ENCODE measurements at regions of chr22 and their contacts with region 1.

Region 1: GRCh38 chr22:45268958-45269844 is 15.5 kb upstream of the UPK3A start:
- DNase-seq: no peak
- ATAC-seq: peak; percentile 38
- H3K4me3 ChIP-seq: peak overlapping the region; percentile 81 to 90 (median 85)
- H3K27ac ChIP-seq: peak overlapping the region; percentile 72
- H3K4me1 ChIP-seq: peaks cover 49% of the 10 kb centered on the region
- H3K27me3 ChIP-seq: no peaks in the 10 kb centered on the region
- CTCF ChIP-seq: peak; percentile 84
- EP300 ChIP-seq: no peak
- POLR2A ChIP-seq: peak; percentile 27 to 80; a peak in 2 of 4 replicates
- RAD21 ChIP-seq: peak; percentile 96

Region 2: DNA sequence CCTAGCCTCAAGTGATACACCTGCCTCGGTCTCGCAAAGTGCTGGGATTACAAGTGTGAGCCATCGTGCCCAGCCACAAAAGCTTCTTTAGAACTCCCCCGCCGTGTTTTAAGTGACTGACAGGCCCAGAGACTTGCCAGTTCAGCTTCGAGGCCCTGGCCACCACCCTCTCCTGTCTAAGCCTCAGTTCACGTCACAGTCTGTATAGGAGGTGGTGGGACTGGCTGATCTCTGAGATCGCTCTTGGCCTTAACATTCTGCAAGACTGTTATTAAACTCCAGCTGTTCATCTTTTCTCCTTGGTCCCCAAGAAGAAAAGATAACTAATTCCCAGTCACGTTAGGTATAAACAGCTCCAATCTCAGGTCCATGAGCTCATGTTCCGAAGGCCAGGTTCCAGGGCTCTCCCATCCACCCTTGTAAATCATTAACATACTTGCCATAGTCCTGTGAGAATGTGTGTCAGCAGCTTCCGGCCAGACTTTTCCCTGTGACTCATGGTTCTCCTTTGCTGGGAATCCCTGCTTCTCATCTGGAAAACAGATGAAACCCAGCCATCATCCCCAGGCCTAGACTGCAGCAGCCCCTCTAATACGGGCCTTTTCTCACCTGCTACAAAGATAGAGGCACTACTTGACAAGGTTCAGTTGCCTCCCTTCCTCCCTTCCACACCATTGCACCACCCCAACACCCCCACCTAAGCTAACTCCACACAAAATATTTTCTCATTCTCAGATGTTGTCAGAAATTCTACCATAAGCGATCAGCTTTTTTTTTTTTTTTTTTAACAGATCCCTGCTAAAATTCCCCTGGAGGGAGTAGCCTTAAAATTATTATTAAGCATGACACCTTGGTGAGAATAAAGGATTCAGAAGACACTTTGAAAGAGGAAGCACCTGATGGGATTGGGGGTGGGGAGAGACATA is 22.9 kb before region 1 on chr22:
- CTCF ChIA-PET with region 1: no interaction called
- POLR2A ChIA-PET with region 1: interaction called, 39 read pairs
- in situ Hi-C with region 1: no loop called
- intact Hi-C with region 1: no loop called
- DNase-seq: peak; percentile 98
- ATAC-seq: peak; percentile 87
- H3K4me3 ChIP-seq: peak overlapping the region in 2 of 3 experiments; percentile 3 to 52; a peak in 3 of 6 replicates
- H3K27ac ChIP-seq: peak overlapping the region; percentile 89
- H3K4me1 ChIP-seq: peaks cover 84% of the 10 kb centered on the region
- H3K27me3 ChIP-seq: no peaks in the 10 kb centered on the region
- CTCF ChIP-seq: no peak
- EP300 ChIP-seq: peak in 1 of 2 experiments; percentile 73; a peak in 2 of 4 replicates
- POLR2A ChIP-seq: peak in 1 of 2 experiments; percentile 58; a peak in 3 of 4 replicates
- RAD21 ChIP-seq: no peak

Region 3: GRCh38 chr22:45309472-45310227 is 40.4 kb after region 1 on chr22 and contains the start of gene FAM118A:
- CTCF ChIA-PET with region 1: no interaction called
- POLR2A ChIA-PET with region 1: interaction called, 56 read pairs
- in situ Hi-C with region 1: loop called (anchors 5 kb)
- intact Hi-C with region 1: loop called (anchors 2 kb)
- DNase-seq: peak; percentile 87
- ATAC-seq: peak; percentile 87
- H3K4me3 ChIP-seq: peak within 1 kb of the TSS; percentile 88 to 94 (median 92)
- H3K27ac ChIP-seq: peak within 1 kb of the TSS; percentile 76
- H3K4me1 ChIP-seq: peaks cover 71% of the 10 kb centered on the region
- H3K27me3 ChIP-seq: no peaks in the 10 kb centered on the region
- CTCF ChIP-seq: peak; percentile 44
- EP300 ChIP-seq: no peak; a peak in 1 of 4 replicates
- POLR2A ChIP-seq: peak; percentile 65 to 75
- RAD21 ChIP-seq: peak; percentile 70
- total RNA-seq, gene FAM118A: 26.4 and 36.7 TPM in 2 replicates

Region 4: DNA sequence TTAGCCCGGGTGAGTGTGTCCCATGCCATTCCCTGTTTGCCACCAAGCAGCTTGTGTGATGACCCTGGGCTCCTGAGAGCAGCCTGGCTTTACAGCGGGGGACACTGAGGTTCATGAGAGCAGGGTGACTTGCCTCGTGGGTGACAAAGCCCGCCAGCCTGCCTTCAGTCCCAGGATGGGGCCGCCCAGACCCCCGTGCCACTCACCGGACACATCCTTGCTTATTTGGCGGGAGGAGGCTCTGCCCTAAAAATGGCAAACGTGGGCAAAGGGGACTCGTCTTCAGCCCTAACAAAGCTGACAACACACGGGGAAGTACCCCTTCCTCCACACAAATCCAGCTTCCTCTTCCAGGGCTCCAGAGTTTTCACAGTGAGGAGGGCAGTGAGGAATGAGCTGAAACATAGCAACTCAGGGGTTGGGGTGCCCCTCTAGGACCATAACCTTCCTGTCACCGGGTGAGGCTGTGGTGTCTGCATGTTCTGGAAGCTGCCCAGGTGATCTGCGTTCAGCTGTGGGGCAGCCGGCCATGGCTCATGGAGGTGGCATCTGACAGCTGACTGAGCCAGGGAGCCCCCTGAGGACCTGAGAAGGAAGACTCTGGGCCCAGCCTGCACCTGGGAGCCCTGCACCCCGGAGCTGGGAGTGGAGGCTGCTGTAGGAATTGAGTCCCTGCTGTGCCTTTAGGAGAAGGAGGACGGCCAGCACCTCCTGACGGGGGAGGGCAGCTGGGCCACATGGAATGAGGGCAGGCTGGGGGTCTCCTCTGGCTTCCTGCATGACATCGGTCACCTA is 161.0 kb after region 1 on chr22:
- CTCF ChIA-PET with region 1: interaction called, 22 read pairs
- POLR2A ChIA-PET with region 1: interaction called, 6 read pairs
- in situ Hi-C with region 1: loop called (anchors 5 kb)
- intact Hi-C with region 1: loop called (anchors 1 kb)
- DNase-seq: no peak
- ATAC-seq: no peak
- H3K4me3 ChIP-seq: no peak overlapping the region
- H3K27ac ChIP-seq: no peak overlapping the region
- H3K4me1 ChIP-seq: peaks cover 23% of the 10 kb centered on the region
- H3K27me3 ChIP-seq: peaks cover 5 to 23% of the 10 kb centered on the region in 2 experiments; a peak in 4 of 5 replicates
- CTCF ChIP-seq: no peak
- EP300 ChIP-seq: no peak
- POLR2A ChIP-seq: no peak
- RAD21 ChIP-seq: no peak

Region 5: DNA sequence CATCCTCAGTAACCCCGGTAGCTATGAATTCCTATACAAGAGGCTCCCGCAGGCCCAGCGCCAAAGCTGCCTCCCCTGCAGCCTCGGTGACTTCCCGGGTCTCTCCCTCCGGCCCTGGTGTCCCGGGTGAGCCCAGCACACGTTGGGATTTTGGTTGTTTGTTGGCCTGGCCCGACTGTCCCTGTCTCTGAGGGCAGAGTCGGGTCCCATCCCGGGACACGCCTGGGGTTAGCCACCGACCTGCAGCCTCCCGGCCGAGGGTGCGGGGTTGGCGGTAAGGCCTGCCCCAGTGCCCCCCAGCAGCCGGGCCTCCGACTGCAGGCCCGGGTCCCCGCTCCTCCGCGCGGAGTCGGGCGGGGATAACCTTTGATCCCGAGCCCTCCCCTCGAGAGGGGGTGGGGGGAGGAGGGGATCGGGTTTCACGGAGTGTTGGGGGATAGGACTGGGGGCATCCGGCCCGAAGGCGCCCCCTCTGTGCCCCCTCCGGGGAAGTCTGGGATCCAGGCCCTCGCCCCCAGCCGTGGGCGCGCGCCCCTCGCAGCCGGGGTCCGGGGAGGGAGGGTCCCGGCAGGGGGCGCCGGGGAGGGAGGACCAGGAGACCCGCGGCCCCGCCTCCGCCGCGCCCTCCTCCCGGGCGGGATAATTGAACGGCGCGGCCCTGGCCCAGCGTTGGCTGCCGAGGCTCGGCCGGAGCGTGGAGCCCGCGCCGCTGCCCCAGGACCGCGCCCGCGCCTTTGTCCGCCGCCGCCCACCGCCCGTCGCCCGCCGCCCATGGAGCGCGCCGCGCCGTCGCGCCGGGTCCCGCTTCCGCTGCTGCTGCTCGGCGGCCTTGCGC is 233.2 kb after region 1 on chr22 and contains the start of gene FBLN1:
- CTCF ChIA-PET with region 1: no interaction called
- POLR2A ChIA-PET with region 1: interaction called, 10 read pairs
- in situ Hi-C with region 1: no loop called
- intact Hi-C with region 1: no loop called
- DNase-seq: peak; percentile 71
- ATAC-seq: peak; percentile 83
- H3K4me3 ChIP-seq: peak within 1 kb of the TSS; percentile 82 to 88 (median 82)
- H3K27ac ChIP-seq: peak within 1 kb of the TSS; percentile 84
- H3K4me1 ChIP-seq: peaks cover 72% of the 10 kb centered on the region
- H3K27me3 ChIP-seq: no peaks in the 10 kb centered on the region; a peak in 1 of 5 replicates
- CTCF ChIP-seq: peak; percentile 68
- EP300 ChIP-seq: peak in 1 of 2 experiments; percentile 27; a peak in 1 of 4 replicates
- POLR2A ChIP-seq: peak; percentile 83 to 85
- RAD21 ChIP-seq: peak; percentile 36; the same call in 1 of the 2 replicates
- total RNA-seq, gene FBLN1: 21.6 and 37.3 TPM in 2 replicates

Measured in HepG2 (cell line).